Activated CD4-positive, alpha-beta memory T cell treated with anti-CD3 and anti-CD28 coated beads, Interleukin-2, amount 10 ng/mL, durations not matched to agents 7 days and 5 days (primary cell): ENCODE measurements at regions of chr16 and their contacts with region 1.

Region 1: GRCh38 chr16:252366-253337 is 18.0 kb downstream of the FAM234A start:
- DNase-seq: peak; percentile 51
- H3K4me3 Mint-ChIP-seq: peak overlapping the region; percentile 65
- H3K27ac Mint-ChIP-seq: peak overlapping the region; percentile 90
- H3K4me1 Mint-ChIP-seq: peaks cover 39% of the 10 kb centered on the region
- H3K27me3 Mint-ChIP-seq: no peaks in the 10 kb centered on the region

Region 2: DNA sequence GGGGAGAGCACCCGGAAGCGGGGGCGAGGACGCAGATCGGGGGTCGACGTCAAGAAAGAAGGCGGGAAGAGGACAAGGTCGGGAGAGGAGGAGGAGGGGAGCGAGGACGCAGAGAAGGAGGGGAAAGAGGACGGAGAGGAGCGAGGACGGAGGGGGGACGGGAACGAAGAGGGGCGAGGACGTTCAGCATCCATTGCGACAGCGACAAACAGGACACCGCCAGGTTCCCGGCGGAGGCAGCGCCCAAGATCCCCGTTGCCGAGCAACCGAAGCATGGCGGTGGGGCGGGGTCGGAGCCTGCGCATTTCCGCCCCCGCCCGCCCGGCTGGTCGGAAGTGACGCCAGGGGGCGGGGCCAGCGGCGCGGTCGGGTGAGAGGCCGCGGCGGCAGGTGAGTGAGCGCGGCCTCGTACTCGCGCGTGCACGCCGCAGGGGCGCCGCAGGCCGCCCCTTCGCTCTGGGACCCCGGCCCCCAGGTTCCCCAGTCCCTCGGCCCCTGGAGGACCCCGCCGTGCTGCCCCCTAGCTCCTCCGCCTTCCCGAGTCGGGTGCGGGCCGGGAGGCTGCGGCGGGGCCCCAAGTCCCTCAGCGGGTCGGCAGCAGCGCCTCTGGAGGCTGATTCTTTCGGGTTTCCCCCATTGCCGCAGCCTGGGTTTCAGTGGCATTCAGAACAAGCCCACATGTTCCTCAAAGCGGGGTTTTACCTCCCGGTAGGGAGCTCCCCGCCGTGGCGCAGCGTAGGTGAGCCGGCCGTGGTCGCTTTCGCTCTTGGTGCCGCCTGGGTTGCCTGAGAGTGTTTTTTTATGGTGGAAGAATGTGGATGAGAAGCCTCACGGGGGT is 18.0 kb before region 1 on chr16 and contains the start of gene FAM234A:
- CTCF ChIA-PET with region 1: interaction called, 10 read pairs
- POLR2A ChIA-PET with region 1: interaction called, 24 read pairs
- DNase-seq: peak; percentile 95
- H3K4me3 Mint-ChIP-seq: peak within 1 kb of the TSS; percentile 91
- H3K27ac Mint-ChIP-seq: peak within 1 kb of the TSS; percentile 94
- H3K4me1 Mint-ChIP-seq: peaks cover 20% of the 10 kb centered on the region
- H3K27me3 Mint-ChIP-seq: no peaks in the 10 kb centered on the region
- total RNA-seq, gene FAM234A: 26.9 to 31.5 TPM

Region 3: GRCh38 chr16:265711-266110 is 13.1 kb after region 1 on chr16:
- CTCF ChIA-PET with region 1: no interaction called
- POLR2A ChIA-PET with region 1: no interaction called
- DNase-seq: no peak
- H3K4me3 Mint-ChIP-seq: no peak overlapping the region
- H3K27ac Mint-ChIP-seq: no peak overlapping the region
- H3K4me1 Mint-ChIP-seq: peaks cover 3% of the 10 kb centered on the region
- H3K27me3 Mint-ChIP-seq: no peaks in the 10 kb centered on the region